ENCODE measurements at regions of chr7 and their contacts with region 1.

Region 1: DNA sequence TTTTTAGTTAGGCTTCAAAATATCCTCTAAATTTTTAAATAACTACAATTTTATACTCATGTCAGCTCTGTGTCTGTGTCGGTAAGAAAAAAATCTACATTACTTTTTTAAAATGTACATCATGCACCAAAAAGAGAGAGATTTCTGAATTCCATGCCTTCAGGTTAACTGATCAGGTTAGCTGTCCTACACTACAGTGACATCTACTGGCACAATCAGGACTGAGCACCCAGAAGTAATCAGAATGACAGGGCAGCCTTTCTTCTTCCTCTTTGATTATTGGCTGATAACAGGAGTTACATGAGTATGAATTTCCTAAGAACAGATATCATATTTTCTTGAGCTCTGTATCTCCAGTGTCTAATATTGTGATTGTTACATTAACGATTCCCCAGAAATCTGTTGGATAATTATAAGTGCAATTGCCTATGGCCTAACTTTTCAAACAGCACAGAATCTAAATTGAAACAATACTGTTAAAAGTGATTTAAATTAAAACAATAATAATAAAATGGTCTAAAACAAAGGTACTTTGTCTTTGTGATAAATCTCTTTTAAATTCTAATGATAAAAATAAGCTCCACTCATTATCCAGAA is 41.8 kb upstream of the HYCC1 start:
- DNase-seq: peak; percentile 71
- H3K4me3 ChIP-seq: no peak overlapping the region
- H3K27ac ChIP-seq: no peak overlapping the region
- H3K4me1 ChIP-seq: peaks cover 25% of the 10 kb centered on the region
- H3K27me3 ChIP-seq: no peaks in the 10 kb centered on the region

Region 2: GRCh38 chr7:22559829-22560489 is 495.7 kb before region 1 on chr7:
- in situ Hi-C with region 1: loop called (anchors 10 kb)
- DNase-seq: peak; percentile 92
- H3K4me3 ChIP-seq: no peak overlapping the region
- H3K27ac ChIP-seq: no peak overlapping the region
- H3K4me1 ChIP-seq: peaks cover 45% of the 10 kb centered on the region
- H3K27me3 ChIP-seq: no peaks in the 10 kb centered on the region

Region 3: GRCh38 chr7:22726345-22727185 is 329.1 kb before region 1 on chr7:
- in situ Hi-C with region 1: loop called (anchors 10 kb)
- DNase-seq: peak; percentile 97
- H3K4me3 ChIP-seq: peak overlapping the region; percentile 78
- H3K27ac ChIP-seq: peak overlapping the region; percentile 94
- H3K4me1 ChIP-seq: peaks cover 59% of the 10 kb centered on the region
- H3K27me3 ChIP-seq: no peaks in the 10 kb centered on the region

Region 4: GRCh38 chr7:22841954-22842353 is 213.7 kb before region 1 on chr7:
- in situ Hi-C with region 1: loop called (anchors 25 kb)
- DNase-seq: peak; percentile 26
- H3K4me3 ChIP-seq: no peak overlapping the region
- H3K27ac ChIP-seq: no peak overlapping the region
- H3K4me1 ChIP-seq: peaks cover 10% of the 10 kb centered on the region
- H3K27me3 ChIP-seq: no peaks in the 10 kb centered on the region

Measured in GM23248 (cell line).